ENCODE measurements at regions of chr2 and their contacts with region 1.

Region 1: GRCh38 chr2:20438334-20439192 is 8.3 kb upstream of the RHOB start:
- DNase-seq: peak; percentile 89
- H3K4me3 Mint-ChIP-seq: peak overlapping the region; percentile 66
- H3K27ac Mint-ChIP-seq: peak overlapping the region; percentile 82
- H3K4me1 Mint-ChIP-seq: peaks cover 26% of the 10 kb centered on the region
- H3K27me3 Mint-ChIP-seq: no peaks in the 10 kb centered on the region
- CTCF ChIP-seq: no peak

Region 2: GRCh38 chr2:20419007-20419576 is 19.5 kb before region 1 on chr2:
- CTCF ChIA-PET with region 1: interaction called, 275 read pairs
- POLR2A ChIA-PET with region 1: interaction called, 35 read pairs
- intact Hi-C with region 1: no loop called
- DNase-seq: no peak
- H3K4me3 Mint-ChIP-seq: no peak overlapping the region
- H3K27ac Mint-ChIP-seq: no peak overlapping the region
- H3K4me1 Mint-ChIP-seq: peaks cover 45% of the 10 kb centered on the region
- H3K27me3 Mint-ChIP-seq: no peaks in the 10 kb centered on the region
- CTCF ChIP-seq: no peak

Region 3: GRCh38 chr2:20424300-20425290 is 14.0 kb before region 1 on chr2:
- CTCF ChIA-PET with region 1: interaction called, 11 read pairs
- POLR2A ChIA-PET with region 1: interaction called, 35 read pairs
- intact Hi-C with region 1: no loop called
- DNase-seq: peak; percentile 61
- H3K4me3 Mint-ChIP-seq: no peak overlapping the region
- H3K27ac Mint-ChIP-seq: peak overlapping the region; percentile 67
- H3K4me1 Mint-ChIP-seq: peaks cover 47% of the 10 kb centered on the region
- H3K27me3 Mint-ChIP-seq: no peaks in the 10 kb centered on the region
- CTCF ChIP-seq: no peak

Region 4: GRCh38 chr2:20452551-20452950 is 14.0 kb after region 1 on chr2:
- CTCF ChIA-PET with region 1: interaction called, 16 read pairs
- POLR2A ChIA-PET with region 1: interaction called, 8 read pairs
- intact Hi-C with region 1: no loop called
- DNase-seq: peak; percentile 91
- H3K4me3 Mint-ChIP-seq: no peak overlapping the region
- H3K27ac Mint-ChIP-seq: no peak overlapping the region
- H3K4me1 Mint-ChIP-seq: no peaks in the 10 kb centered on the region
- H3K27me3 Mint-ChIP-seq: no peaks in the 10 kb centered on the region
- CTCF ChIP-seq: peak; percentile 52

Region 5: DNA sequence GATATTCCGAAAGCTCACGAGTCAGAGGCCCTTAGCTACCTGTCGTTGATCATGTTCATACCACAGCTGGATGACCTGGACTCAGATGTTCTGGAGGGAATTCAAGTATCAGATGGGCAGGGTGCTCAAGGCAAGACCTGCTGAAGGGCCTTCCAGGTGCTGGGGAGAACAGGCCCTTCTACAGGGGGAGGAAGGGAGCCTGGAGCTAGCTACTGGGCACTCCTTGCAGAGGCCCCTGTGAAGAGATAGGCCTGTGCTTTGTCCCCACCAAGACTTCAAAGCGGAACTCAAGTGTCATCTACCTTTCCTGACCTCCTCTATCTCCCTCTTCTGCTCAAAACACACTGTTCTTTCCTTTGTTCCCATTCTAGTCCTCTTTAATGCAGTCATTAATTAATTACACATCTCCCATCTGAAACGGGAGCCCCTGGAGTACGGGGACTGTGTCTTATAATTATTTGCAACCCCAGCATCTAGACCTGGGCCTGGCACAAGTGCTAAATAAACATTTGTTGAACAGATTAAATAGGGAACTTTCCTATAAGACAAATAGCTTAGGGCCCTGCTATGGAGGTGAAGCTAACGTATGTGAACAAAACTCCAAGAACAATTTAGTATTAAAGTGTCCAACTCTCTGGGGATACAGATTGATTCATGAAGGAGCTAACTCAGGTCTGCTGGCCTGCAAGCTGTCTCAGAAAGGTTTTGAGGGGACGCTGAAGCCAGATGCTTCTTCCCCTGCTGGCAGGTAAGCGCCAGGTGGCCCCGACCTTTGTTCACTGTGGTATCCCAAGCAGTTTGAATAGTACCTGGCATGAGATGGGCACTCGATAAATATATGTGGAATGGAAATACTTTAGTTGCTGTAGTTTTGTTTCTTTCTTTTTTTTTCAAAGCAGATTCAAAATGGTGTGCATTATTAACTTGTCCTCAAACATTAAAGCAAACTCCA is 30.3 kb after region 1 on chr2:
- CTCF ChIA-PET with region 1: no interaction called
- POLR2A ChIA-PET with region 1: no interaction called
- intact Hi-C with region 1: no loop called
- DNase-seq: no peak
- H3K4me3 Mint-ChIP-seq: no peak overlapping the region
- H3K27ac Mint-ChIP-seq: no peak overlapping the region
- H3K4me1 Mint-ChIP-seq: peaks cover 5% of the 10 kb centered on the region
- H3K27me3 Mint-ChIP-seq: no peaks in the 10 kb centered on the region
- CTCF ChIP-seq: no peak

Region 6: DNA sequence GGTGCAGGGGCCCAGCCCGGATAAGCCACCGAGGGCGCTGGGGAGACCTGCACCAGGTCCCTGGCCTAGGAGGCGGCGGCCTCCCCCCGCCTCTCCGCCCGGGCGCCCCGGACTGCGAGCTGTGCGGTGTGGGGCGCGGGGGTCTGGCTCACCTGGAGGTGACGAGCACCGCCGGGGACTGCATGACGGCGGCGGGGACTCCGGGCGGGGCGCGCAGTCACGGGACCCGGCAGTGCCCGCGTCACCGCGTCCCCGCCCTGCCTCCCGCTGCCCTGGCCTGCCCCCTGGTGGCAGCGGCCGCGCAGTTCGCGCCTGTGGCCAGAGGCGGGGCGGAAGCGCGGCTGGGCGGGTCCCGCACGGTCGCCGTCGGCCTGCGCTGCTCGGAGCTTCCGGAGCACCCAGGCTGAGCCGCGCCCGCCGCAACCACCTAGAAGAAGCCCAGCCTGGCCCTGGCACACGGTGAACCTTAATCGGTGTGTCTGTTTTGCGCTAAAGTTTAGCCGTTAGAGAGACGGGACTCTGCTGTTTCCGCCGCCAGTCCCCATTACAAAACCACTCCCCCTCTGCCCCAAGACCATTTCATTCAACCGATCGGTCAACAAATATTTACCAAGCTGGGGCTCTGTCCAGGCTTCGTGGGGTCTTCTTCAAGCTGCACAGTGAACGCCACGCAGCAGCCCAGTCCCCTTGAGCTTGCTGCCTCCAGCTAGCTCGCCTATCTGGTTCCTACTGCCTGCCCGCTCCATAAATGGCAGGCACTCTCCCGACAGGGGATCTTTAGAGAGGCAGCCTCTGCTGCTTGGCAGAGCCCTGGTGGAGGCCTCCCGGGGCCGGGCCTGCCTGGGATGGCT is 212.5 kb after region 1 on chr2 and contains the start of gene HS1BP3:
- CTCF ChIA-PET with region 1: interaction called, 54 read pairs
- POLR2A ChIA-PET with region 1: interaction called, 17 read pairs
- intact Hi-C with region 1: no loop called
- DNase-seq: peak; percentile 81
- H3K4me3 Mint-ChIP-seq: peak within 1 kb of the TSS; percentile 82
- H3K27ac Mint-ChIP-seq: peak within 1 kb of the TSS; percentile 62
- H3K4me1 Mint-ChIP-seq: peaks cover 22% of the 10 kb centered on the region
- H3K27me3 Mint-ChIP-seq: peaks cover 12% of the 10 kb centered on the region
- CTCF ChIP-seq: peak; percentile 89
- total RNA-seq, gene HS1BP3: 10.0 and 25.1 TPM in 2 replicates